Activated CD4-positive, alpha-beta memory T cell treated with anti-CD3 and anti-CD28 coated beads, Interleukin-2, amount 10 ng/mL, durations not matched to agents 7 days and 5 days (primary cell): ENCODE measurements at regions of chr7 and their contacts with region 1.

Region 1: GRCh38 chr7:158704704-158705468 is at the start of gene NCAPG2:
- DNase-seq: peak; percentile 98
- H3K4me3 Mint-ChIP-seq: peak within 1 kb of the TSS; percentile 93
- H3K27ac Mint-ChIP-seq: peak within 1 kb of the TSS; percentile 87
- H3K4me1 Mint-ChIP-seq: peaks cover 54% of the 10 kb centered on the region
- H3K27me3 Mint-ChIP-seq: no peaks in the 10 kb centered on the region
- total RNA-seq, gene NCAPG2: 151 TPM

Region 2: GRCh38 chr7:158716802-158717201 is 11.9 kb after region 1 on chr7:
- CTCF ChIA-PET with region 1: interaction called, 3 read pairs
- POLR2A ChIA-PET with region 1: interaction called, 10 read pairs
- DNase-seq: no peak
- H3K4me3 Mint-ChIP-seq: no peak overlapping the region
- H3K27ac Mint-ChIP-seq: no peak overlapping the region
- H3K4me1 Mint-ChIP-seq: peaks cover 9% of the 10 kb centered on the region
- H3K27me3 Mint-ChIP-seq: peaks cover 35% of the 10 kb centered on the region

Region 3: DNA sequence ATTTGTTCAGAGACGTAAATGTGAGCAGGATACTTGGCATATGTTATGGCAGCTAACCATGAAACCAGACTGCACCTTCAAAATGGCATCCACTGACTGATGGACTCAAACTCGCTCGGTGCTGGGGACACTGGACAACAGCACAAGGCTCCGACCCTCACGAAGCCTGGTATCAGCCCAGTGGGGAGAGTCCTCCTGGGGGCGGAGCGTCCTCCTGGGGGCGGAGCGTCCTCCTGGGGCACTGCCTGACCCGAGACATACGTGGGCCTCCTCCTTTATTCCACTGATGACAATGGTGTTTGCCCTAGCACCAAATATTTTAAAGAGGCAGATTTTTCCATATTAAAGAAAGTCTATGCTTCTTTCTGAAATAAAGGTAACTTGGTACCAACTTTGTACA is 85.0 kb after region 1 on chr7:
- CTCF ChIA-PET with region 1: no interaction called
- POLR2A ChIA-PET with region 1: no interaction called
- DNase-seq: no peak
- H3K4me3 Mint-ChIP-seq: no peak overlapping the region
- H3K27ac Mint-ChIP-seq: no peak overlapping the region
- H3K4me1 Mint-ChIP-seq: no peaks in the 10 kb centered on the region
- H3K27me3 Mint-ChIP-seq: no peaks in the 10 kb centered on the region

Region 4: GRCh38 chr7:158824028-158824427 is 119.1 kb after region 1 on chr7:
- CTCF ChIA-PET with region 1: interaction called, 5 read pairs
- POLR2A ChIA-PET with region 1: interaction called, 21 read pairs
- DNase-seq: peak; percentile 85
- H3K4me3 Mint-ChIP-seq: peak overlapping the region; percentile 42
- H3K27ac Mint-ChIP-seq: peak overlapping the region; percentile 76
- H3K4me1 Mint-ChIP-seq: peaks cover 67% of the 10 kb centered on the region
- H3K27me3 Mint-ChIP-seq: no peaks in the 10 kb centered on the region

Region 5: DNA sequence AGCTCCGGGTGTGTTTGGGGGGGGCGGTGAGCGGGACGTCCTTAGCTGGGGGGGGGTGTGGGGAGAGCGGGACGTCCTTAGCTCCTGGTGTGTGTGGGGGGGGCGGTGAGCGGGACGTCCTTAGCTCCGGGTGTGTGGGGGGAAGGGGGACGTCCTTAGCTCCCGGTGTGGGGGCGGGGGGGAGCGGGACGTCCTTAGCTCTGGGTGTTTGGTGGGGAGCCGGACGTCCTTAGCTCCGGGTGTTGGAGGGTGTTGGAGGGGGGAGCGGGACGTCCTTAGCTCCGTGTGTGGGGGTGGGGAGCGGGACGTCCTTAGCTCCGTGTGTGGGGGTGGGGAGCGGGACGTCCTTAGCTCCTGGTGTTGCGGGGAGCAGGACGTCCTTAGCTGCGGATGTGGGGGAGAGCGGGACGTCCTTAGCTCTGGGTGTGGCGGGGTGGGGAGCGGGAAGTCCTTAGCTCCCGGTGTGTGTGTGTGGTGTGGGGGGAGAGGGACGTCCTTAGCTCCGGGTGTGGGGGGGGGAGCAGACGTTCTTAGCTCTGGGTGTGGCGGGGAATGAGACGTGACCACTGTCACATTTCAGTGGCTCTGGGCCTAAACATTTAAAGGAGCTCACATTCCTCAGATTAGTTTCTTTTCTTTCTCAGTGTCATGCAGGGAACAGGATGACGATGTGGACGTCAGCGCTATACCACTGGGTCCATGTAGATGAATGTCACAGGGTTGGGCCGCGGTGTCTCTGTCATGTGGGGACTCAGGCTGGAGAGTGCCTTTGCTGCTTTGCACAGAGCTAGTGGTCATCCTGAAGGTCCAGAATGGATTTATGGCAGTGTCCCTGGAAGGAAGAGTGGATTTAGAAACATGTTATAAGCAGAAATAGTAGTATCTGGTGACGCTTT is 159.0 kb after region 1 on chr7:
- CTCF ChIA-PET with region 1: interaction called, 4 read pairs
- POLR2A ChIA-PET with region 1: interaction called, 31 read pairs
- DNase-seq: peak; percentile 60
- H3K4me3 Mint-ChIP-seq: peak overlapping the region; percentile 76
- H3K27ac Mint-ChIP-seq: peak overlapping the region; percentile 81
- H3K4me1 Mint-ChIP-seq: peaks cover 49% of the 10 kb centered on the region
- H3K27me3 Mint-ChIP-seq: no peaks in the 10 kb centered on the region